Mammary epithelial cell (primary cell): ENCODE measurements at regions of chr2 and their contacts with region 1.

Region 1: DNA sequence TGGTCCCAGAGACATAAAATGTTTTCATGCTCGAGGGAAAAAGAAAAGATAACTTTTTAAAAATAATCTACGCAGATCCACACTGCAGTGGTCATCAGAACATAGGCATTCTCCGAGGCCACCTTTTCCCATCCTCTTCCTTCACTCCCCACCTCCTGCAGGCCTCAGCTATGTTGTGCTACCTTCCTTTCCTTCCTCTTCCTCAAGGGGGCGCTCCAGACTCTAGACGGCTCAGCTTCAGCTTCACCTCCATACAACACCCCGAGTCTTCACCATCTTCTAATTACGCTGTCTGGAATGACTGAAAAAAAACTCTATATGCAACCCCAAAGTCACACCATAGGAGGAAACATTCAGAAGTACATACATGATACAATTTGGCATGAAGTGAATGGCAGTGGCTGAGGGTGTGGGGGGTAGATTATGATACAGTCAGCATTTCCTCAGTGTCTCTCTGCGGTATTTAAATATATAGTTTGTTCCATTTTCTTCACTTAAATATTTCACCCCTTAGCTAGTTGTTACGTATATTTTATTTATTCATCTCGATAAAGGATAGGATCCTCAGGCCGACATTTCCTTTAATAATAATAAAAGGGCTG is 583.6 kb downstream of the IRS1 start:
- DNase-seq: peak; percentile 21
- H3K4me3 ChIP-seq: no peak overlapping the region
- H3K27ac ChIP-seq: no peak overlapping the region
- H3K4me1 ChIP-seq: peaks cover 21% of the 10 kb centered on the region
- H3K27me3 ChIP-seq: no peaks in the 10 kb centered on the region
- CTCF ChIP-seq: peak; percentile 60 to 78

Region 2: GRCh38 chr2:225668606-225669266 is 547.3 kb before region 1 on chr2:
- CTCF ChIA-PET with region 1: interaction called, 3 read pairs
- dilution Hi-C with region 1: no loop called
- in situ Hi-C with region 1: no loop called
- intact Hi-C with region 1: loop called (anchors 10 kb)
- DNase-seq: peak; percentile 71
- H3K4me3 ChIP-seq: no peak overlapping the region
- H3K27ac ChIP-seq: peak overlapping the region; percentile 62
- H3K4me1 ChIP-seq: peaks cover 4% of the 10 kb centered on the region
- H3K27me3 ChIP-seq: no peaks in the 10 kb centered on the region
- CTCF ChIP-seq: peak; percentile 87 to 94

Region 3: GRCh38 chr2:226030788-226031646 is 185.0 kb before region 1 on chr2:
- CTCF ChIA-PET with region 1: no interaction called
- dilution Hi-C with region 1: no loop called
- in situ Hi-C with region 1: no loop called
- intact Hi-C with region 1: no loop called
- DNase-seq: peak; percentile 42
- H3K4me3 ChIP-seq: peak overlapping the region; percentile 37 to 63 (median 47)
- H3K27ac ChIP-seq: peak overlapping the region; percentile 67
- H3K4me1 ChIP-seq: peaks cover 22% of the 10 kb centered on the region
- H3K27me3 ChIP-seq: no peaks in the 10 kb centered on the region
- CTCF ChIP-seq: no peak